Activated CD4-positive, alpha-beta memory T cell treated with anti-CD3 and anti-CD28 coated beads for 36 hours (primary cell): ENCODE measurements at regions of chr2 and their contacts with region 1.

Region 1: GRCh38 chr2:39948016-39948719 is 169.1 kb upstream of the THUMPD2 start:
- DNase-seq: no peak
- H3K4me3 Mint-ChIP-seq: no peak overlapping the region
- H3K27ac Mint-ChIP-seq: peak overlapping the region; percentile 42
- H3K4me1 Mint-ChIP-seq: peaks cover 17% of the 10 kb centered on the region
- H3K27me3 Mint-ChIP-seq: peaks cover 2% of the 10 kb centered on the region

Region 2: DNA sequence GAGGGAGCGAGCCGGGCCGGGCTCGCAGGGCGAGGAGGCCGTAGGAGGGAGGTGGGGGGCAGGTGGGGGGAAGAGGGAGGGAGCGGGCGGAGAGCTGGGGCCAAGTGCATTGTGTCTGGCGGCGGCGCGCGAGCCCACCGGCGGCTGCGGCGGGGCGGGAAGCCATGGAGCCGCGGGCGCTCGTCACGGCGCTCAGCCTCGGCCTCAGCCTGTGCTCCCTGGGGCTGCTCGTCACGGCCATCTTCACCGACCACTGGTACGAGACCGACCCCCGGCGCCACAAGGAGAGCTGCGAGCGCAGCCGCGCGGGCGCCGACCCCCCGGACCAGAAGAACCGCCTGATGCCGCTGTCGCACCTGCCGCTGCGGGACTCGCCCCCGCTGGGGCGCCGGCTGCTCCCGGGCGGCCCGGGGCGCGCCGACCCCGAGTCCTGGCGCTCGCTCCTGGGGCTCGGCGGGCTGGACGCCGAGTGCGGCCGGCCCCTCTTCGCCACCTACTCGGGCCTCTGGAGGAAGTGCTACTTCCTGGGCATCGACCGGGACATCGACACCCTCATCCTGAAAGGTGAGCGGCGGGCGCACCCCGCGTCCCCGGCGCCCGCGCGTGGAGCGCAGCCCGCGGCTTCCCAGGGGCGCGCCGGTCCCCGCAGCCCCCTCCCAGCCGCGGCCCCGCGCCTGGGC is 282.2 kb before region 1 on chr2 and contains the start of gene TMEM178A:
- CTCF ChIA-PET with region 1: no interaction called
- POLR2A ChIA-PET with region 1: no interaction called
- intact Hi-C with region 1: no loop called
- DNase-seq: no peak
- H3K4me3 Mint-ChIP-seq: peak within 1 kb of the TSS; percentile 49
- H3K27ac Mint-ChIP-seq: no peak within 1 kb of the TSS
- H3K4me1 Mint-ChIP-seq: peaks cover 9% of the 10 kb centered on the region
- H3K27me3 Mint-ChIP-seq: peaks cover 56% of the 10 kb centered on the region
- total RNA-seq, gene TMEM178A: 0.29 to 0.48 TPM

Region 3: GRCh38 chr2:39913648-39914461 is 34.3 kb before region 1 on chr2:
- CTCF ChIA-PET with region 1: no interaction called
- POLR2A ChIA-PET with region 1: no interaction called
- intact Hi-C with region 1: no loop called
- DNase-seq: no peak
- H3K4me3 Mint-ChIP-seq: no peak overlapping the region
- H3K27ac Mint-ChIP-seq: no peak overlapping the region
- H3K4me1 Mint-ChIP-seq: no peaks in the 10 kb centered on the region
- H3K27me3 Mint-ChIP-seq: peaks cover 4% of the 10 kb centered on the region

Region 4: DNA sequence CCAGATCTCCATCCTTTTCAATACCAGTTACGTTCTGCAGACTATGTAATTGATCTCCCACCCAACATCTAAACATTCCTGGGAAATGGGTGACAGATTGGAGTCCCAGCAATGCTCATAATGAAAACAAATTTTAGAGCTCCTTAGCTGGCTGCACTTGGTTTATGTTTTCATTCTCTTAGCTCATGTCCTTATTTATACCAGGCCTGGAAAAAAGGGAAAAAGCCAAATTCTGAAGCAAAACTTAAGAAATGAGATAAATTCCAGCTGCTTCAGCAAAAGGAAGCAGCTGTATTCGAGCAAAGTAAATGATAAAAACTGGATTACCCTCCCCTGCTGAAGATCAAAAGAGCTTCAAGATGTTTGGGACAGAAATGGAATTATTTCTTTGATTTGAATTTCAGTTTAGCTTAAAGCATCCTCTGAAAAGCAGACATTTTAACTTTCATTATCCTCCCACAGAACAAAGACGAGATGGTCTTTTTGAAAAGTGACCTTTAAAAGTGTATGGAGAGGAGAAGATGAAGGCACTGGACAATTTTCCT is 27.4 kb after region 1 on chr2:
- CTCF ChIA-PET with region 1: no interaction called
- POLR2A ChIA-PET with region 1: no interaction called
- intact Hi-C with region 1: no loop called
- DNase-seq: no peak
- H3K4me3 Mint-ChIP-seq: no peak overlapping the region
- H3K27ac Mint-ChIP-seq: no peak overlapping the region
- H3K4me1 Mint-ChIP-seq: no peaks in the 10 kb centered on the region
- H3K27me3 Mint-ChIP-seq: peaks cover 2% of the 10 kb centered on the region

Region 5: GRCh38 chr2:39996653-39997080 is 48.5 kb after region 1 on chr2:
- CTCF ChIA-PET with region 1: no interaction called
- POLR2A ChIA-PET with region 1: no interaction called
- intact Hi-C with region 1: loop called (anchors 2 kb)
- DNase-seq: no peak
- H3K4me3 Mint-ChIP-seq: no peak overlapping the region
- H3K27ac Mint-ChIP-seq: no peak overlapping the region
- H3K4me1 Mint-ChIP-seq: no peaks in the 10 kb centered on the region
- H3K27me3 Mint-ChIP-seq: no peaks in the 10 kb centered on the region

Region 6: GRCh38 chr2:40032650-40033319 is 84.6 kb after region 1 on chr2:
- CTCF ChIA-PET with region 1: no interaction called
- POLR2A ChIA-PET with region 1: no interaction called
- intact Hi-C with region 1: loop called (anchors 2 kb)
- DNase-seq: no peak
- H3K4me3 Mint-ChIP-seq: no peak overlapping the region
- H3K27ac Mint-ChIP-seq: no peak overlapping the region
- H3K4me1 Mint-ChIP-seq: no peaks in the 10 kb centered on the region
- H3K27me3 Mint-ChIP-seq: no peaks in the 10 kb centered on the region